ENCODE measurements at regions of chr13 and their contacts with region 1.

Region 1: GRCh38 chr13:110617302-110618072 is 2.1 kb downstream of the NAXD start:
- DNase-seq: peak; percentile 79
- H3K4me3 ChIP-seq: peak overlapping the region; percentile 81
- H3K27ac ChIP-seq: peak overlapping the region; percentile 83
- H3K27me3 ChIP-seq: no peaks in the 10 kb centered on the region
- CTCF ChIP-seq: no peak

Region 2: DNA sequence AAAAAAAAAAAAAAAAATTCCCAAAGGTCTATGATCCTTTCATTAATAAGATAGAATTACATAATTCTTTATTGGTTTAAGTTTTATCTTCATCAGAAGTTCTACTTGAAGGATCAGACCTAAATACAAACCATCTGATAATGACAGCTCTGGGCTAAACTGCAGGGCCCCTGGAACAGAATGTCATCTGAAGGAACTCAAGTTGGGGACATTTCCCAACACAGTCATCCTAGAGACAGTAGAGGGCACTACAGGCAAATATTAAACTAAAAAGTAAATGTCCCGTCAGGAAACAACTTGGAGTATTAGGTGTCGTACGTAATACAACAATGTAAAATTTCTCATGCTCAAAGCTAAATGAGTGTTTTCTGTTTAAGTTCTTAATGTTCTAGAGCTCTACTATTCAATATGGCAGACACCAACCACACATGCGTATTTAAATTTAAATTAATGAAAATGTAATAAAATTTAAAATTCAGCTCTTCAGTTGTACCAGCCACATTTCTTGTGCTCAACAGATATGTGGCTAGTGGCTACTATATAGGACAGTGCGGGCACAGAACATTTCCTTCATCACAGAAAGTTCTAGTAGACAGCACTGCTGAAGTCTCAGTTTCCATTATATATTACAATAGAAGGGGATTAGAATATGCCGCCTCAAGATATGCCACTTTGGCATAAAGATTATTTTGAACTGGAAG is 23.9 kb before region 1 on chr13:
- CTCF ChIA-PET with region 1: interaction called, 11 read pairs
- POLR2A ChIA-PET with region 1: no interaction called
- DNase-seq: no peak
- H3K4me3 ChIP-seq: no peak overlapping the region
- H3K27ac ChIP-seq: no peak overlapping the region
- H3K27me3 ChIP-seq: peaks cover 2% of the 10 kb centered on the region
- CTCF ChIP-seq: peak; percentile 54

Measured in AG04450 (cell line).